Ascending aorta (tissue), 2 donors: ENCODE measurements at regions of chr4 and their contacts with region 1.

Region 1: DNA sequence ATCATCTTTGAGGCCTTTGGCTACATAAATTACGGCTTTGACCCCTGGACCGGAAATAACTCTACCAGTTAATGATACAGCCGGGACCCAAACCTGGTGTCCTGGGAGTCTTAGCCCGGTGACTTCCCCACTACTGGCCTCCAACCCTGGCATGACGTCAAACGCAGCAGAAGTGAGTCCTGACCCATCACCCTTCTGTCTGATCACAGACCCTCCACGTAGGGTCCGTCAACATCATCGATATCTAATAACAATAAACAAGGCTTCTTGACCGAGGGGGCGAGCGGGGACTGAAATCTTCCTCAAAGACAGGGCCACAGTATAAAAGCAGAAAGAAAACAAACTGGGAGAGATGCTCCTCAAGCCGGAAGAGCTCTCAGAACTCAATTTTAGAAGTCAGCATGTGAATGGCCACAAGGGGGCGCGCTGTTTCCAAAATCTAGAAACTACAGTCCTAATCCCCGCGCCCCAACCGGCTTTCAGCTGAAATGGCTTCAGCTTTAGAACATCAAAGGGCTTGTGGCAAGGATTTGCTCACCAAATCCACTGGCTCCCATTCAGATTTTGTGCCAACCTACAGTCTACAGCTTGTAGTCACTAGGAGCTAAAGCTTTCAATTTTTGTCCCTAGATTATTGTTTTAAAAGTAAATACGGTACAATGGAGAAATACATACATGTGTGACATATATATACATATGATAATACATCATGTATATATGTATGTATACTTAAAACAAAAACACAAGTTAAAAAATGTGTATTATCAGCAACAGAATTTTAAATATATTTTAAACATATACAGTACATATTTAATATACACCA is 46.4 kb upstream of the ENPP6 start:
- DNase-seq: peak; percentile 46 to 98
- H3K4me3 ChIP-seq: no peak overlapping the region
- H3K27ac ChIP-seq: no peak overlapping the region
- H3K4me1 ChIP-seq: peaks cover 0 to 2% of the 10 kb centered on the region in 2 donors
- H3K27me3 ChIP-seq: no peaks in the 10 kb centered on the region
- CTCF ChIP-seq: peak; percentile 83 to 92 (median 90)

Region 2: GRCh38 chr4:184053434-184053833 is 210.7 kb before region 1 on chr4:
- intact Hi-C with region 1: no loop called
- DNase-seq: no peak
- H3K4me3 ChIP-seq: no peak overlapping the region
- H3K27ac ChIP-seq: no peak overlapping the region
- H3K4me1 ChIP-seq: no peaks in the 10 kb centered on the region
- H3K27me3 ChIP-seq: no peaks in the 10 kb centered on the region
- CTCF ChIP-seq: no peak

Region 3: DNA sequence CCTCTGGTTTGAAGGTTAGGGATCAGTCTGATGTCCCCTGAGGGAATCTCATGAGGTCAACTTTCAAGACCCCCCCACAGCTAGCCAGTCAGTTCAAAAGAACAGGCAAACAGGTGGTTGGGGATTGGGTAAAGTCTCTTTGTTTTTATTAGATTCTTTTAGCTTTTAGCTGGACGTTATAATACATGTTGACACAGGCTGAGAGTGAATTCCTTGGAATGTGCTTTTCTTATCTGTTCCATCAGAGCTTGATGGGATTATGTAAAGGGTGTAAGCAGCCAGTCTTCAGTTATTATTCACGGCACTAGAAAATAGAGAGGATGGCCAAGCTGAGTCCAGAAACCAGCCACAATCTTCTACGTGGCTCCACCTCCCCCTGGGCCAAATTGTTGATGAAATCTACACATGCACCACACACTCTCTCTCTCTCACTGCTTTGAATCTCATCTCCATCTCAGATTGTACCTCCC is 67.2 kb before region 1 on chr4:
- intact Hi-C with region 1: no loop called
- DNase-seq: no peak
- H3K4me3 ChIP-seq: no peak overlapping the region
- H3K27ac ChIP-seq: no peak overlapping the region
- H3K4me1 ChIP-seq: no peaks in the 10 kb centered on the region
- H3K27me3 ChIP-seq: no peaks in the 10 kb centered on the region
- CTCF ChIP-seq: no peak

Region 4: DNA sequence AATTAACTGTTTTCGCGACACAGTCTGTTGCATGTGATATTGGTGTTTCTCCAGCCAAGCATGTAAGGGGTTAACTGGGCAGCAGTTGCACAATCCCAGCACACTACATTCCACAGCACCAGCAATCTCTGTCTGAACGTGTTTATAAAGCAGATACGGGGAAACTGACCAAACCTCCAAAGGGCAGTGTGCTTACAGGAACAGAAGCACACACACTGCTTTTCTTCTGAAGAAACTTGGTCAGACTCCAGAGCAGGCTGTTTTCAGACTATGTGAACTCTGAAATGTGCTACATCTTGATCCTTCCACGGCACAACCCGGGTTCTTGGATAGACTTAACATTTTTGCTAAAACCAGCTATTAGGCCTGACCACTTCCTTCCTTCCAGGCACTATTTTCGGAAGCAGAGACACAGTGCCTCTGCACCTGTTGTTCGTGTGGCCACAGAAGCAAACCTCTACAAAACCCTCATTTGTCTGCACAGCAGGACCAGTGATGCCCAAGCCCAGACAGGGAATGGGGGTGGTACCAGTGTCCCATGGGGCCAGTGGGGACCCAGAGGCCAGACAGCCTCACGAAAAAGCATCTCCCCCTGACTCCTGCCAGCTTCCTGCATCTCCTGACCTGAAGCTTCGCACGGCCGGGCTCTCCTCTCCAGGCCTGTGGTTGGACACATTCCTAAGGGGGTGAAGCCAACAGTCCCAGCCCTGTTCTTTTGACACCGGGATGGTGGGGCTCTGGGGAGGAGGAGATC is 120.1 kb after region 1 on chr4:
- intact Hi-C with region 1: loop called (anchors 5 kb)
- DNase-seq: peak in 1 of 2 donors; percentile 69
- H3K4me3 ChIP-seq: peak overlapping the region; percentile 34 to 55
- H3K27ac ChIP-seq: peak overlapping the region; percentile 67 to 77
- H3K4me1 ChIP-seq: peaks cover 17 to 28% of the 10 kb centered on the region in 2 donors
- H3K27me3 ChIP-seq: no peaks in the 10 kb centered on the region
- CTCF ChIP-seq: no peak

Region 5: GRCh38 chr4:184474263-184475095 is 210.4 kb after region 1 on chr4 and contains the start of gene IRF2:
- intact Hi-C with region 1: loop called (anchors 2 kb)
- DNase-seq: peak; percentile 87 to 98
- H3K4me3 ChIP-seq: peak within 1 kb of the TSS; percentile 89 to 95
- H3K27ac ChIP-seq: peak within 1 kb of the TSS; percentile 96 to 98
- H3K4me1 ChIP-seq: peaks cover 0 to 18% of the 10 kb centered on the region in 2 donors
- H3K27me3 ChIP-seq: no peaks in the 10 kb centered on the region
- CTCF ChIP-seq: peak in 2 of 3 experiments; percentile 7 to 15
- total RNA-seq, gene IRF2: 39.6 TPM